Naive thymus-derived CD8-positive, alpha-beta T cell (primary cell): ENCODE measurements at regions of chr14 and their contacts with region 1.

Region 1: DNA sequence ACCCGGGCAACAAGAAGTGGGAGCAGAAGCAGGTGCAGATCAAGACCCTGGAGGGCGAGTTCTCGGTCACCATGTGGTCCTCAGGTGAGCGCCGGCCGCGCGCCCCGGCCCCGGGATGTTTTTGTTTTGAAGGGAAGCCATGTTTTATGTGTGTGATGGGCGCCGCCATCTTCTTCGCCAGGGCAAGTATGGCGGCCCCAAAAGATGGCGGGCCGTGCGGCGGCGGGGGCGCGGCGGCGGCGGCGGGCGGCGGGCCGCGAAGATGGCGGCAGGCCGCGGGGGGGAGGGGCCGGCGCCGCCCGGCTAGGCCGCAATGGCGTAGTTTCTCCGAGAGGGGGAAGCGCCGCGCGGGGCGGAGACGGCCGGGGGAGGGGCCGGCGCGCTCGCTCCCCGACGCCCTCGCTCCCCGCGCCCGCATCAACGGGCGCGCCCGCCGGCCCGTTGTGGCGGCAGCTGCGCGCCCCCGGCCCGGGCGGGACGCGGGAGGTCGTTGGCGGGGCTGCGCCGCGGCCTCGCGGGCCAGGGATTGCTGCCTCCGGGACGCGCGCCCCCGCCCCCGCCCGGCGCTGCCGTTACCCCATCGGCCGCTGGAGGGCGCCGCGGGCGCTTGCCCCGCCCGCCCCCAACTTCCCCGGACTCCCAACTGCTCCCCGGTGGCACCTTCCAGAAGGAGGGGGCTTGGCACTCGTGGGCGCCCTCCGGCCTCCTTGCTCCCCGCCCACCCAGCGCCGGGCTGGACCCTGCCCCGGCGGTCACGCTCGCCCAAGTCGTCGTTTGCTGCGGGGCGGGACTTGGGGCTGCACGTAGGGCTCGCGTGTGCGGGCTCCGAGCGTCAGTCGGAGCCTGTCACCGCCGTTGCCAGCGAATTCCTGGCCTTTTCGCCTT is 1.1 kb downstream of the YY1 start:
- DNase-seq: peak; percentile 76 to 90 (median 84)
- ATAC-seq: peak; percentile 51
- H3K4me3 Mint-ChIP-seq: peak overlapping the region; percentile 83 to 96 (median 92)
- H3K27ac Mint-ChIP-seq: peak overlapping the region; percentile 91 to 97 (median 96)
- H3K4me1 Mint-ChIP-seq: peaks cover 35 to 69% (median 60%) of the 10 kb centered on the region in 4 donors
- H3K27me3 Mint-ChIP-seq: no peaks in the 10 kb centered on the region

Region 2: GRCh38 chr14:99891900-99892299 is 348.2 kb before region 1 on chr14:
- POLR2A ChIA-PET with region 1: no interaction called
- DNase-seq: no peak
- ATAC-seq: no peak
- H3K4me3 Mint-ChIP-seq: no peak overlapping the region
- H3K27ac Mint-ChIP-seq: no peak overlapping the region
- H3K4me1 Mint-ChIP-seq: no peaks in the 10 kb centered on the region
- H3K27me3 Mint-ChIP-seq: peaks cover 0 to 28% (median 11%) of the 10 kb centered on the region in 5 donors

Region 3: DNA sequence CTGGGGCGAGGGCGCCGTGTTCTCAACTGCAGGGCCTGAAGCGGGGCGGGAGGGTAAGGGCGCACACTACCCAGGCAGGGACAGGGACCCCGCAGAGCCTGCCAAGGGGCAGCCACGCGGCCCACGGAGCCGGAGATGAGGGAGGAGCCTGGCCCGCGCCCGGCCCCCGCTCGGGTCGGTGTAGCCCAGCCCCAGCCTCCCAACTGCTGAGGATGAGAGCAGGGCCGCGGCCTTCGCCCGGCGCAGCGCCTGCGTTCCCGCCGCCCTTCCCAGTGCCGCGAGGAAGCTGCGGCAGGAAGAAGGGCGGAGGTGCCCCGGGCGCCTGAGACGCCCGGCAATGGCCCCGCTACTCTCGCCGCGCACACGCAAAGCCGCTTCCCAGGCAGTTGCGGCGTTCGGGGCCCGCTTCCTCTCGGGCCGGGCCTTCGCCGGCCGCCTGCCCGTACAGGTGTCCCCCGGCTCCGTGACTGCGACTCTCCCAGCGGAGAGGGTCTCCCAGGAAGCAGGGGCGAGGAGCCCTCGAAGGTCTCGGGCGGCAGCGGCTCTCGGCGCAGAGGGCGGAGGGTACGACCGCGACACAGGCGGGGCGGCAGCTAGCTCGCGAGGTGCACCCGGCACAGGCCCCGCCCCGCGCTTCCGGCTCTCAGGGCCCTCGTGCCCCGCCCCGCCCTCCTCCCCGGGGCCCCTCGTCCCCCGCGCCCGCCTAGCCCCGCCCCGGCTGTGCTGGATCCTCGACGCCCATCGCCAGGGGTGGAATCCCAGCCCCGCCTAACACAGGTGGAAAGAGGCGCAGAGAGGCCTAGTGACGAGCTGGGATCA is 25.9 kb before region 1 on chr14:
- POLR2A ChIA-PET with region 1: interaction called, 265 read pairs
- DNase-seq: peak; percentile 81 to 98 (median 90)
- ATAC-seq: peak; percentile 90 to 93
- H3K4me3 Mint-ChIP-seq: peak overlapping the region; percentile 77 to 87 (median 85)
- H3K27ac Mint-ChIP-seq: peak overlapping the region; percentile 85 to 97 (median 94)
- H3K4me1 Mint-ChIP-seq: peaks cover 16 to 44% (median 34%) of the 10 kb centered on the region in 4 donors
- H3K27me3 Mint-ChIP-seq: no peaks in the 10 kb centered on the region

Region 4: DNA sequence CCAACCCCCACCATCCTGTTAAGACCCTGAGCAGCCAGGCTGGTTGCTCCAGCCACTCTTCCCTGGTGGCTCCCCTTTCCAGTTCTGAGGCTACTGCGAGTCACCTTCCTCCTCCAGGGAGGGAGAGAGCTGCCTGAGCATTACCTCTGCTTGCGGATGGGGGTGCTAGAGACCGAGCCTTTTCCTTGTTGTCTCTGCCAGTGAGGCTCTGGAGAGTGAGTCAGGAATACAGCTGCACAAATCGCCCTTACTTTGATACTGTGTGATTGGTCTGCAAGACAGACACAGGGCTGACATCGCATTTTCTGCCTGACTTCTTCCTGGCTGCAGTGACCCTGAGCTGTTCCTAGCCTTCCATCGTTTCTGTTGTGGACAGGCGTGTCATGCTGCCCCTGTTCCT is 177.4 kb after region 1 on chr14:
- POLR2A ChIA-PET with region 1: no interaction called
- DNase-seq: no peak
- ATAC-seq: no peak
- H3K4me3 Mint-ChIP-seq: no peak overlapping the region
- H3K27ac Mint-ChIP-seq: no peak overlapping the region
- H3K4me1 Mint-ChIP-seq: peaks cover 2 to 21% (median 5%) of the 10 kb centered on the region in 4 donors
- H3K27me3 Mint-ChIP-seq: no peaks in the 10 kb centered on the region